Spleen (tissue), 13 donors: ENCODE measurements at regions of chr1 and their contacts with region 1.

Region 1: GRCh38 chr1:64675718-64676345 is 69.0 kb upstream of the RAVER2 start:
- DNase-seq: no peak
- H3K4me3 ChIP-seq: no peak overlapping the region
- H3K27ac ChIP-seq: no peak overlapping the region
- H3K4me1 ChIP-seq: no peaks in the 10 kb centered on the region
- H3K27me3 ChIP-seq: no peaks in the 10 kb centered on the region
- CTCF ChIP-seq: peak in 8 of 11 experiments; percentile 32 to 71 (median 67)
- POLR2A ChIP-seq: no peak

Region 2: DNA sequence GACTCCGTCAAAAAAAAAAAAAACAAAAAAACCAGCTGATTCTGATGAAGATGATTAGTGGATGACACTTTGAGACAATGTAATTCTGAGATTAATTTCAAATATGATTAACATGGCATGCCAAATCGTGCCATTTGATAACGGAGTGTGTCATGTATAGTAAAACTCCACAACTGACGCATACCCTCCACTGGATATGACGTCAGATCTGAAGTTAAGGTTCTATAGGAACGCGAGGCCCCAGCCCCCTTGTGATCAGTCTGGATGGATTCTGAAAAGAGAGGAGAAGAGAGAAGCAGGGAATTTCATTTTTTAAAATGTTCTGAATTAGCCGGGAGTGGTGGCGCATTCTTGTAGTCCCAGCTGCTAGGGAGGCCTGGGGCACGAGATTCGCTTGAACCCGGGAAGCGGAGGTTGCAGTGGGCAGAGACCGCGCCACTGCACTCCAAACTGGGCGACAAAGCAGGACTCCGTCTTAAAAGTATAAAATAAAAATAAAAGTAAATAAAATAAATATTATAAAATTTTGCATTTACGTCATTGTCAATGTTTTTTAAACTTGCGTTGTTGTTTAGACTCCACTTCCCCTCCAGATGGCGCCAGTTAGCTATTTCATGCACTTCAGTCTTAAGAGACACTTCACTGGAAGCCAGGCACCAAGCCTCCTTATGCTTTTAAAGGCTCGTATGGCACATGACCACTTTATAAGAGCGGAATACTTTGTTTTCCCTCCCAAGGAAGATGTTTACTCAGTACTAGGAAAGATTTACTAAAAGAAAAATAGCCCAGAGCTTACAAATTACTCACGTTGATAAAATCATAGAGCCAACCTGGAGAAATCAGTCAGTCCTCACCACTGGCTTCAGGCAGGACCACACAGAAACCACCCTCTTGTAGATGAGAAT is 406.9 kb before region 1 on chr1:
- intact Hi-C with region 1: loop called (anchors 5 kb)
- DNase-seq: no peak
- H3K4me3 ChIP-seq: no peak overlapping the region
- H3K27ac ChIP-seq: peak overlapping the region in 1 of 8 donors; percentile 19
- H3K4me1 ChIP-seq: peaks cover 0 to 7% (median 5%) of the 10 kb centered on the region in 6 donors
- H3K27me3 ChIP-seq: no peaks in the 10 kb centered on the region
- CTCF ChIP-seq: peak in 10 of 11 experiments; percentile 33 to 78 (median 64)
- POLR2A ChIP-seq: no peak

Region 3: DNA sequence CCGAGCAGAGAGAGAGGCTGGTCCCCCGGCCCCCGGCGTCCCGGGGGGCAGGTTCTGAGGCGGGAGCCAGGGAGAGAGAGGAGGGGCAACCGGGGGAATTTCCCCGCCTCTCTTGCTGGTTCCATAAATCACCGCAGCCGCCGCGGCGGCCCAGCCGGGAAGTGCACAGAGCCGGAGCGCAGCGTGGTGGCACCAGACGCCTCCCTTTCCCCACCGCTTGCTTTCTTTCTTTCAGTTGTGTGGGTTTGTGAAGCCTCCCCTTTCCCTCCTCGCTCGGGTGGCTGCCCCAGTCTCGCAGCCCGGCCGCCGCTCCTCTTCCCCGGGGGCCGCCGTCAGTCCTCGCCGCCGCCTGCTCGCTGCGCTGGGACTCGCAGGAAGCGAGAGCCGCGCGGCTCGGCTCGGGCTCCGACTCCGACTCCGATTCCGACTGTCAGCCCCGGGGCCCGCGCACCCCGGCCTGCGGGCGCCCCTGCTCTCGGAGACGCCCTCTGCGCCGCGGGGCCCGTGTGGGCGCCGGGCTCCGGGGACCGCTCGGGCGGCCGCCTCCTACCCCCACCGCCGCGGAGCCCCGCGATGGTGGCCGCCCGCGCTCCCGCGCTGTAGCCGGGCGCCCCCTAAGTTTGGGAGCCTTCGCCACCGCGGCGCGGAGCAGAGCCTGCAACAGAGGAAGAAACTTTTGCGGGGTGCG is 205.7 kb before region 1 on chr1 and contains the start of gene CACHD1:
- intact Hi-C with region 1: loop called (anchors 10 kb)
- DNase-seq: peak; percentile 85
- H3K4me3 ChIP-seq: peak within 1 kb of the TSS; percentile 52 to 84 (median 60)
- H3K27ac ChIP-seq: peak within 1 kb of the TSS; percentile 63 to 87 (median 86)
- H3K4me1 ChIP-seq: peaks cover 5 to 49% (median 36%) of the 10 kb centered on the region in 6 donors
- H3K27me3 ChIP-seq: peaks cover 0 to 58% (median 20%) of the 10 kb centered on the region in 7 donors
- CTCF ChIP-seq: peak in 8 of 11 experiments; percentile 36 to 61 (median 51)
- POLR2A ChIP-seq: no peak
- total RNA-seq, gene CACHD1: 9.5 to 17.3 (median 13.0) TPM

Region 4: GRCh38 chr1:64933296-64934070 is 257.7 kb after region 1 on chr1:
- intact Hi-C with region 1: no loop called
- DNase-seq: no peak
- H3K4me3 ChIP-seq: peak overlapping the region in 1 of 8 donors; percentile 13
- H3K27ac ChIP-seq: peak overlapping the region in 6 of 8 donors; percentile 23 to 69 (median 64)
- H3K4me1 ChIP-seq: peaks cover 31 to 91% (median 63%) of the 10 kb centered on the region in 6 donors
- H3K27me3 ChIP-seq: no peaks in the 10 kb centered on the region
- CTCF ChIP-seq: no peak
- POLR2A ChIP-seq: no peak